ENCODE measurements at regions of chr13 and their contacts with region 1.

Region 1: GRCh38 chr13:20495082-20496023 is 30.3 kb downstream of the CRYL1 start:
- DNase-seq: peak; percentile 67
- ATAC-seq: peak; percentile 63; the same call in 1 of the 2 replicates
- H3K4me3 Mint-ChIP-seq: no peak overlapping the region
- H3K27ac Mint-ChIP-seq: no peak overlapping the region
- H3K4me1 Mint-ChIP-seq: peaks cover 6% of the 10 kb centered on the region; the same call in 1 of the 2 replicates
- H3K27me3 Mint-ChIP-seq: peaks cover 3% of the 10 kb centered on the region; the same call in 1 of the 2 replicates
- CTCF ChIP-seq: peak; percentile 89

Region 2: GRCh38 chr13:19852766-19853165 is 642.6 kb before region 1 on chr13:
- CTCF ChIA-PET with region 1: no interaction called
- POLR2A ChIA-PET with region 1: no interaction called
- DNase-seq: no peak
- ATAC-seq: no peak
- H3K4me3 Mint-ChIP-seq: no peak overlapping the region
- H3K27ac Mint-ChIP-seq: no peak overlapping the region
- H3K4me1 Mint-ChIP-seq: no peaks in the 10 kb centered on the region
- H3K27me3 Mint-ChIP-seq: no peaks in the 10 kb centered on the region
- CTCF ChIP-seq: no peak

Region 3: DNA sequence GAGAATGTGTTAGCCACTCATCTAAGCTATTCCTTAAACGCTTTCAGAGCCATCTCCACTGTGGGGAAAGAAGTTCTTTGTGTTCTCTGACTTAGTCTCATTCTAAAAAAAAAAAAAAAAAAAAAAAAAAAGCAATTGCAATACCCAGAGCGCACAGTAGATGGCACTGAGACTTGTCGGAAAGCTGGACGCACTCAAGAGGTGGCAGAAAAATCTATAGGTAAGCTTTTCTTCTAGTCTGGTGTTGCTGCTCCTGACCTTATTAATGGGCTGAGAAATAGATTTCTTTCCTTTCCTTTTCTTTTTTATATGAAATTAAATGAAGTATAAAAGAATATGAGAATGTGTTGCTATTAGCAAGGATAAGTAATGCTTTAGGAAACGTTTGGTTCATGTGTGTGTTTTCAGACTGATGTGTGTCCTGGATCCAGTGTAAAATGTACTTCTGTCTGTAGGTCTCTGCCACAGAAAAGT is 298.0 kb before region 1 on chr13:
- CTCF ChIA-PET with region 1: interaction called, 13 read pairs
- POLR2A ChIA-PET with region 1: no interaction called
- DNase-seq: no peak
- ATAC-seq: no peak
- H3K4me3 Mint-ChIP-seq: no peak overlapping the region
- H3K27ac Mint-ChIP-seq: no peak overlapping the region
- H3K4me1 Mint-ChIP-seq: peaks cover 12% of the 10 kb centered on the region
- H3K27me3 Mint-ChIP-seq: peaks cover 54% of the 10 kb centered on the region
- CTCF ChIP-seq: no peak

Region 4: DNA sequence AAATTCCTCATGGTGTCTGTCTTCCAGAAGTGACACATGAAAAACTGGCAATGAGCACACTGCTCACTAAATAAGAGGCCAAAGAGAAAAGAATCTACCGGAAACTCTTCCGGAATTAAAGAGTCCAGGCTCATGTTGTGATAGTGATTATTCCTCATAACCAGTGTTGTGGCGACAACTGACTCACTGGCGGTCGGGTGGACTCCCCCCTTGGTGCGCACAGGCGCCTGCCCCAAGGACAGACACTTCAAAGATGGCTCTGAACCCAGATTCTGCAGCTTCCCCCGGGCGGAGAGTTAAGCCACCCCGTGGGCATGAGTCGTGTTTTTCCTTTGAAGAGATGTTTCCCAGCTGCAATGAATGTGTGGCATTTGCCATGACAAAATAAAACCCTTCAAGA is 218.4 kb after region 1 on chr13:
- CTCF ChIA-PET with region 1: interaction called, 15 read pairs
- POLR2A ChIA-PET with region 1: no interaction called
- DNase-seq: no peak
- ATAC-seq: no peak
- H3K4me3 Mint-ChIP-seq: peak overlapping the region; percentile 65; the same call in 1 of the 2 replicates
- H3K27ac Mint-ChIP-seq: no peak overlapping the region
- H3K4me1 Mint-ChIP-seq: peaks cover 31% of the 10 kb centered on the region
- H3K27me3 Mint-ChIP-seq: peaks cover 16% of the 10 kb centered on the region
- CTCF ChIP-seq: no peak

Region 5: GRCh38 chr13:20721454-20722357 is 226.4 kb after region 1 on chr13:
- CTCF ChIA-PET with region 1: interaction called, 21 read pairs
- POLR2A ChIA-PET with region 1: no interaction called
- DNase-seq: peak; percentile 62
- ATAC-seq: peak; percentile 71
- H3K4me3 Mint-ChIP-seq: peak overlapping the region; percentile 68
- H3K27ac Mint-ChIP-seq: no peak overlapping the region
- H3K4me1 Mint-ChIP-seq: peaks cover 18% of the 10 kb centered on the region
- H3K27me3 Mint-ChIP-seq: peaks cover 8% of the 10 kb centered on the region
- CTCF ChIP-seq: no peak

Region 6: DNA sequence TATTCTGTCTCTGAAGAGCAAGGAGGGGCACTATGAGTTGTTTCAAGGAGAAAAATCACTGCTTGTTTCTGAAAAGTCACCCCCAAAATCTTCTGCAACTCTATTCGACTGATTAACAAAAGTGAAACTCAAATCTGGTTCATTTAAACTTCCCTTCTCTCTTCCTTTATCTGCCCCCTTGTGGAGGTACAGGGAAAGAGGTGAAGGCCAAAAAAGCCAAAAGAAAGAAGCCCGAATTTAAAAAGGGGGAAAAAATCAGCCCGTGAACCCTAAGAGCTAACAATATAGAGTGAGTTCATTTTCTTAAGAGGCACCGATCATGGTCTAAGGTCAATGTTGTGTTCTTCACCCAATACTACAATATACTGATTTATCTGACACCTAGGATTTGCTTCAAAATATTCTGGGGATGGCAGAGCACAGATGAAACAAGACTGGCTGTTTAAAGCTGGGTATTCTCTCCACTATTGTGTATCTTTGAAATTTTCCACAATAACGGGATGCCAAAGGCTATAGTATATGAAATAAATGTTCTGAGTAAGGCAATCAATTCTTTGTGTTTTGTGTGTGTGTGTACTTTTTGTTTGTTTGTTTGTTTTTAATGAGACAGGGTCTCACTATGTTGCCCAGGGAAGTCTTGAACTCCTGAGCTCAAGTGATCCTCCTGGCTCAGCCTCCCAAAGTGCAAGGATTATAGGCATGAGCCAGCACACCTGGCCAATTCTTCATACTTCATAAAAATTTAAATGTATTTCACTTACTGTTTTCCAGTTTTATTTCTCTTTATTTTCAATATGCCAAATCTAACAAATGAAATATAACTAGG is 333.4 kb after region 1 on chr13:
- CTCF ChIA-PET with region 1: interaction called, 42 read pairs
- POLR2A ChIA-PET with region 1: no interaction called
- DNase-seq: no peak
- ATAC-seq: peak; percentile 51; the same call in 1 of the 2 replicates
- H3K4me3 Mint-ChIP-seq: no peak overlapping the region
- H3K27ac Mint-ChIP-seq: peak overlapping the region; percentile 47; the same call in 1 of the 2 replicates
- H3K4me1 Mint-ChIP-seq: peaks cover 20% of the 10 kb centered on the region
- H3K27me3 Mint-ChIP-seq: no peaks in the 10 kb centered on the region
- CTCF ChIP-seq: peak; percentile 40

Region 7: DNA sequence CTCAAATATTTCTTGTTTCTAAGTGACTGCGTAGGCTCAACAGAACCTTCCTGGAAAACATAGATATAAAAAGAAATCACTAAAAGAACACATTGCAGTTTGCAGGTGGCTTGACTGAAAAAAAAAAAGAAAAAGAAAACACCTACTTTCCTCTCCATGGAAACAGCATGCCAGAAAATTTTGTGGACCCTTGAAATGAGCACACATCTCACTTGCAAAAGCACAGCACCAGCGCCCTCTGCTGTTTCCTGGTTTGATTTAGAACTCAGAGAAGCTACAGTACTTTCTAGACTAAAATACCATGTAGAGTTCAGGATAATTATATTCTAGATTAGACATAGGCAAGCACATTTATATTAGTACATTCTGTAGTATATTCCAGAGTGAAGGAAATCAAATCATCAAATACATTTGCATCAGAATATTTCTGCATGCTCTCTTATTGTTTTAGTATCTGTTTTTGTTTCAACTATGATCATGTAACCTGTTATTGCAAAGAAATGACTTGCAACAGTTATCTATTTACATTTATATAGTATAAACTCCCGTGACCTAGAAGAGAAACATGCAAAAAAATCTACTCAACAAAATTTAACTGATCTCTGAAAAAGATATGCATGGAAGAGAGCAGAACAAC is 429.5 kb after region 1 on chr13:
- CTCF ChIA-PET with region 1: interaction called, 33 read pairs
- POLR2A ChIA-PET with region 1: no interaction called
- DNase-seq: peak; percentile 87
- ATAC-seq: peak; percentile 78
- H3K4me3 Mint-ChIP-seq: no peak overlapping the region
- H3K27ac Mint-ChIP-seq: no peak overlapping the region
- H3K4me1 Mint-ChIP-seq: peaks cover 6% of the 10 kb centered on the region; the same call in 1 of the 2 replicates
- H3K27me3 Mint-ChIP-seq: no peaks in the 10 kb centered on the region
- CTCF ChIP-seq: peak; percentile 49

Region 8: DNA sequence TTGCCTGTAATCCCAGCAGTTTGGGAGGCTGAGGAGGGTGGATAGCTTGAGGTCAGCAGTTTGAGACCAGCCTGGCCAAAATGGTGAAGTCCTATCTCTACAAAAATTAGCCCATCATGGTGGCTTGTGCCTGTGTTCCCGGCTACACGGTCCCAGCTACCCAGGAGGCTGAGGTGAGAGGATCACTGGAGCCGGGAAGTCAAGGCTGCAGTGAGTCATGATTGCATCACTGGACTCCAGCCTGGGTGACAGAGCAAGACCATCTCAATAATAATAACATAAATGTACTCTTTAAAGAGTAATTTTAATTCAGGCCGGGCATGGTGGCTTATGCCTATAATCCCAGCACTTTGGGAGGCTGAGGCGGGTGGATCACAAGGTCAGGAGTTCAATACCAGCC is 642.3 kb after region 1 on chr13:
- CTCF ChIA-PET with region 1: no interaction called
- POLR2A ChIA-PET with region 1: no interaction called
- DNase-seq: no peak
- ATAC-seq: no peak
- H3K4me3 Mint-ChIP-seq: no peak overlapping the region
- H3K27ac Mint-ChIP-seq: no peak overlapping the region
- H3K4me1 Mint-ChIP-seq: peaks cover 22% of the 10 kb centered on the region
- H3K27me3 Mint-ChIP-seq: no peaks in the 10 kb centered on the region
- CTCF ChIP-seq: no peak